H1 (cell line): ENCODE measurements at regions of chr11 and their contacts with region 1.

Region 1: GRCh38 chr11:12052676-12053605 is 44.5 kb upstream of the DKK3 start:
- DNase-seq: no peak
- H3K4me3 ChIP-seq: no peak overlapping the region
- H3K27ac ChIP-seq: no peak overlapping the region
- H3K4me1 ChIP-seq: peaks cover 0 to 3% (median under 1%) of the 10 kb centered on the region in 4 experiments; a peak in 2 of 7 replicates
- H3K27me3 ChIP-seq: no peaks in the 10 kb centered on the region
- CTCF ChIP-seq: peak; percentile 43 to 69 (median 62)
- EP300 ChIP-seq: no peak
- POLR2A ChIP-seq: no peak
- RAD21 ChIP-seq: peak; percentile 55 to 73

Region 2: DNA sequence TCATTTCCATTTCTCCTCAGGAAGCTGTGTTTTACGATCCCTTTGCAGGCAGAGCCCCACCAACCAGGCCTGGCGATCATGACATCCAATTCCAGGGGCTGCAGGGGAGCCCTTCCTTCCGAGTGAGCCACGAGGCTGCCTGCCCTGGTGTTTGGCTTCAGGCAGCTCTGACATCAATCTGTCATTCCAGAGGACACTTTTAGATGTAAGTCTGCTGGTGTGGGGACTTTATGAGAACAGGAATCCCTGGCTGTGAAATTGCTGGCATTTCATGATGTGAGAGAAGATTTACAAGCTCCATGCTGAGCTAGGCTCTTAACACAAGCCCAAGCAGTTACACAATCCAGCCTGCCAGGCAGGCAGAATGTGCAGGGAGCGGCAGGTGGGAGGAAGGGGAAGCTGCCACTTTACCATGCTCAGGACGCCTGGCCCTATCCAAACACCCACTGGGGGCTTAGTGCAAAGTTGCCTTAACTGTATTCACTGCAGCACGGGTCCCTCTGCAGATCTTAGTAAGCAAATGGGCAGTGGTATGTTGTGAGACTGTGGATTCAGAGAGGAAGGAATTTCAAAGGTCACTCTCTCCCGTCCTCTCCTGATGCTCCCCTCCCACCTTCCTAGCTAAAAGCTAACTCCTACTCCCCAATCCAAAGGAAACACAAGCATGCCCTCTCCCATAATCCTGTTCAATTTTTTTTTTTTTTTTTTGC is 14.0 kb after region 1 on chr11:
- CTCF ChIA-PET with region 1: interaction called, 29 read pairs
- POLR2A ChIA-PET with region 1: interaction called, 3 read pairs
- DNase-seq: no peak
- H3K4me3 ChIP-seq: no peak overlapping the region; a peak in 1 of 8 replicates
- H3K27ac ChIP-seq: no peak overlapping the region
- H3K4me1 ChIP-seq: peaks cover 2 to 9% (median 5%) of the 10 kb centered on the region in 4 experiments; a peak in 4 of 7 replicates
- H3K27me3 ChIP-seq: peaks cover 0 to 2% (median under 1%) of the 10 kb centered on the region in 4 experiments; a peak in 1 of 7 replicates
- CTCF ChIP-seq: no peak
- EP300 ChIP-seq: no peak
- POLR2A ChIP-seq: no peak
- RAD21 ChIP-seq: no peak

Region 3: GRCh38 chr11:12224537-12224893 is 171.6 kb after region 1 on chr11:
- CTCF ChIA-PET with region 1: interaction called, 10 read pairs
- POLR2A ChIA-PET with region 1: no interaction called
- DNase-seq: no peak
- H3K4me3 ChIP-seq: no peak overlapping the region
- H3K27ac ChIP-seq: no peak overlapping the region
- H3K4me1 ChIP-seq: no peaks in the 10 kb centered on the region
- H3K27me3 ChIP-seq: no peaks in the 10 kb centered on the region
- CTCF ChIP-seq: no peak
- EP300 ChIP-seq: no peak
- POLR2A ChIP-seq: no peak
- RAD21 ChIP-seq: no peak